WTC11 (cell line): ENCODE measurements at regions of chr16 and their contacts with region 1.

Region 1: GRCh38 chr16:22098405-22099255 is 6.3 kb downstream of the VWA3A start:
- DNase-seq: no peak
- ATAC-seq: peak; percentile 85
- H3K4me3 Mint-ChIP-seq: no peak overlapping the region
- H3K27ac Mint-ChIP-seq: peak overlapping the region; percentile 35; the same call in 1 of the 2 replicates
- H3K4me1 Mint-ChIP-seq: peaks cover 28% of the 10 kb centered on the region
- H3K27me3 Mint-ChIP-seq: no peaks in the 10 kb centered on the region; the same call in 1 of the 2 replicates
- CTCF ChIP-seq: no peak

Region 2: GRCh38 chr16:22001591-22001990 is 97.0 kb before region 1 on chr16:
- CTCF ChIA-PET with region 1: interaction called, 19 read pairs
- POLR2A ChIA-PET with region 1: interaction called, 4 read pairs
- DNase-seq: no peak
- ATAC-seq: no peak
- H3K4me3 Mint-ChIP-seq: peak overlapping the region; percentile 41; the same call in 1 of the 2 replicates
- H3K27ac Mint-ChIP-seq: no peak overlapping the region
- H3K4me1 Mint-ChIP-seq: peaks cover 8% of the 10 kb centered on the region
- H3K27me3 Mint-ChIP-seq: peaks cover 6% of the 10 kb centered on the region
- CTCF ChIP-seq: no peak

Region 3: GRCh38 chr16:22055878-22056277 is 42.8 kb before region 1 on chr16:
- CTCF ChIA-PET with region 1: interaction called, 16 read pairs
- POLR2A ChIA-PET with region 1: no interaction called
- DNase-seq: peak; percentile 73
- ATAC-seq: peak; percentile 96
- H3K4me3 Mint-ChIP-seq: no peak overlapping the region
- H3K27ac Mint-ChIP-seq: peak overlapping the region; percentile 22; the same call in 1 of the 2 replicates
- H3K4me1 Mint-ChIP-seq: peaks cover 5% of the 10 kb centered on the region; the same call in 1 of the 2 replicates
- H3K27me3 Mint-ChIP-seq: no peaks in the 10 kb centered on the region
- CTCF ChIP-seq: peak; percentile 47

Region 4: GRCh38 chr16:22117609-22118008 is 19.0 kb after region 1 on chr16:
- CTCF ChIA-PET with region 1: interaction called, 21 read pairs
- POLR2A ChIA-PET with region 1: no interaction called
- DNase-seq: no peak
- ATAC-seq: no peak
- H3K4me3 Mint-ChIP-seq: no peak overlapping the region
- H3K27ac Mint-ChIP-seq: no peak overlapping the region
- H3K4me1 Mint-ChIP-seq: no peaks in the 10 kb centered on the region
- H3K27me3 Mint-ChIP-seq: no peaks in the 10 kb centered on the region; the same call in 1 of the 2 replicates
- CTCF ChIP-seq: no peak

Region 5: GRCh38 chr16:22174642-22175041 is 76.0 kb after region 1 on chr16:
- CTCF ChIA-PET with region 1: interaction called, 11 read pairs
- POLR2A ChIA-PET with region 1: no interaction called
- DNase-seq: no peak
- ATAC-seq: no peak
- H3K4me3 Mint-ChIP-seq: no peak overlapping the region
- H3K27ac Mint-ChIP-seq: no peak overlapping the region
- H3K4me1 Mint-ChIP-seq: no peaks in the 10 kb centered on the region
- H3K27me3 Mint-ChIP-seq: no peaks in the 10 kb centered on the region
- CTCF ChIP-seq: no peak

Region 6: DNA sequence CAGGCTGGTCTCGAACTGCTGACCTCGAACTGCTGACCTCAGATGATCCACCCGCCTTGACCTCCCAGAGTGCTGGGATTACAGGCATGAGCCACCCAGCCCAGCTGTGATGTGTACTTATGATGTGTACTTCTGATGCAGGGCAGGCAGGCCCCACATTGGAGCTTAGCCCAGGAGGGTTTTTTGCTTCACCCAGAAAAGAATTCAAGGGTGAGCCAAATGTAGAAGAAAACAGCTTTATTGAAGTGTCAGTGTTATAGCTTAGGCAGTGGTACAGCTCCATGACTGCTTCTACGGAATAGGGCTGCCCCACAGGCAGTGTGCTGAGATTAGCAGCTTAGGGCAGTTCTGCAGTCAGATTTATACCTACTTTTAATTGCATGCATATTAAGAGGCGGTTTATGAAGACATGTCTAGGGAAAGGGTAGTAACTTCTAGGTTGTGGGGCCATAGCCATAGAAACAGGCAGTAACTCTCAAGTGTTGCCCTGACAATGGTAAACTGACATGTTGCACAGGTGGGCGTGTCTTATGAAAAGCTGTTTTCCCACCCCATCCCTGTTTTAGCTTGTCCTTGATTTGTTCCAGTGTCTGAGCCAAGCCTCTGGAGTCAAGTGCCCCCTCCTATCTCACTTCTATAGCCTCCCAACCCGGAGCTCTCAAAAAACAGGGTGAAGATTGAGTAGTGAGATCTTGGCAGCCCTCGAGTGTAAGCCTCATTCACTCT is 174.4 kb after region 1 on chr16:
- CTCF ChIA-PET with region 1: no interaction called
- POLR2A ChIA-PET with region 1: no interaction called
- DNase-seq: no peak
- ATAC-seq: no peak
- H3K4me3 Mint-ChIP-seq: no peak overlapping the region
- H3K27ac Mint-ChIP-seq: no peak overlapping the region
- H3K4me1 Mint-ChIP-seq: no peaks in the 10 kb centered on the region; the same call in 1 of the 2 replicates
- H3K27me3 Mint-ChIP-seq: no peaks in the 10 kb centered on the region
- CTCF ChIP-seq: no peak

Region 7: GRCh38 chr16:22386976-22387375 is 288.3 kb after region 1 on chr16:
- CTCF ChIA-PET with region 1: no interaction called
- POLR2A ChIA-PET with region 1: no interaction called
- DNase-seq: no peak
- ATAC-seq: no peak
- H3K4me3 Mint-ChIP-seq: no peak overlapping the region
- H3K27ac Mint-ChIP-seq: no peak overlapping the region
- H3K4me1 Mint-ChIP-seq: no peaks in the 10 kb centered on the region
- H3K27me3 Mint-ChIP-seq: no peaks in the 10 kb centered on the region
- CTCF ChIP-seq: no peak